Sigmoid colon (tissue), 7 donors: ENCODE measurements at regions of chr10 and their contacts with region 1.

Region 1: DNA sequence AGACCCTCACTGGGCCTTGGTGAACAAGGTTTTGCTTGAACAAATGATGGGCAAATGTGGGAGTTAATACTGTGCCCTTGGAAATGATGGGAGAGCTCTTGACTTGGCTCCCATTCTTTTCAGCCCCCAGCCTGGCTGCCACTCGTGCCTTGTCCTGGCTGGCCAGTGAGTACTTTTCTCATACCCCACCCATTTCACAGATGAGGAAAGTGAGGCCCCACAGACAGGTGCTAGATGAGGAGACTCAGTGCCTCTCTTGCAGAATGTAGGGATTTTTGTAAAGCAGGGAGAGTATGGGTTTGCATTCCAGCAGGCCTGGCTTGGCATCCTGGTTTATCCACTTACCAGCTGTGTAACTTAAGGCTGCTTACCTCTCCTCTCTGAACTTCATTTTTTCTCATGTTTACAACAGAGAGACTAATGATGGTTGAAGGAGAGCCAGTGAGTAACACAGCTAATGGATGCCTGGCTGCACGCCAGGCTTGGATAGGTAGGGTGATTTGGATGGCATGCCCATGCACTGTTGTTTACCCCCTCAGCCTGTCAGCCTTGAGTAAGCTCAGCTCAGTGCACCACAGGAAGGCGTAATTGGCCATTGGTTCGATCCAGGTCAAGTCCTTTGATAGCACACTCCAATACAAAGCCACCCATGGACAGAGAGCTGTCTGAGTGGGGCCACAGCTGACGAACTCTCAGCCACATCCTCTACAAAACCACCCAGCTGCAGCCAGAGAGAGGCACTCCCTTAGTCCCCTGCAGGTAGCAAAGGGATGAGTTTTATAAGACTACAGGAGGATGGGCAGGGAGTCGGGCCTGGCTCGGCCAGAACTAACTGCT is 436.8 kb downstream of the RPS24 start:
- DNase-seq: no peak
- H3K4me3 ChIP-seq: no peak overlapping the region
- H3K27ac ChIP-seq: peak overlapping the region in 3 of 4 donors; percentile 79 to 90 (median 84)
- H3K4me1 ChIP-seq: peaks cover 0 to 38% (median 35%) of the 10 kb centered on the region in 4 donors
- H3K27me3 ChIP-seq: no peaks in the 10 kb centered on the region
- CTCF ChIP-seq: no peak
- EP300 ChIP-seq: no peak
- POLR2A ChIP-seq: no peak

Region 2: DNA sequence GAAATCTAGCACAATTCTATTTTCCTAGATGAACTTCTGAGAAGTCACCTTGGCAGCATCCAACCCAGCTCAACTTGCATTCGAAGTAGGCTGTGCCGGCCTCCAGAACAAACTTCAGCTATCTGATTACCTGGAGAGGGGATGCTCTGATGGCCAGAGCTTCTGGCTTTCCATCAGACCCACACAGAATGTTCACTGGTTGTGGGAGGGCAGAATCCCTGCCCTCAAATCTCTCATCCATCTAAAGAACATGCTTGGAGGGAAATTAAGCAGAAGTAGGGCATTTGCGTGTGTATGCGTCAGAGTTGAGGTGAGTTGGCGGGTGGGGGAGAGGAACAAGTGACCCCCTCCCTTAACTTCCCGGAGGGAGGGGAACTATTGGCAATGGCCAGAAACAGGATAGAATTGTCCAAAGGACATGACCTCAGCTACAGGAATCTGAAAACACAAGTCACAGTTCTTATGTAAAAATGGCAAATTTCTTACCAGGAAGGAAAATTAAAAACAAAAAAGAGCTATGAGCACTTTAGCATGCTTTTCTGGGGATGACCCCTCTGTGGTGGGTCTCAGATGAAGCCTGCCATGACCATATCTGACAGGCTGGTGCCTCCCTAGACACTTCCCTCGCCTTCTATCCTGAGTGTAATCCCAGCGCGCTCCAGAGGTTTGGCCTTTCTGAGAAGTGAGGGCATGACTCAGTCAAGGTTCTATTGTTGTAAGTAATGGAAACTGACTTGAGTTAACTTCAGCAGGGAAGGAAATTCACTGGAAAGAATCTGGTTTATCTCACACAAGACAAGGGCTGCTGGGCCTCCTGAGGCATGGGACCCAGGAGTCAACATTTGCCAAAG is 158.1 kb before region 1 on chr10:
- intact Hi-C with region 1: loop called (anchors 5 kb)
- DNase-seq: peak; percentile 87
- H3K4me3 ChIP-seq: no peak overlapping the region
- H3K27ac ChIP-seq: peak overlapping the region; percentile 16 to 93 (median 88)
- H3K4me1 ChIP-seq: peaks cover 0 to 69% (median 49%) of the 10 kb centered on the region in 4 donors
- H3K27me3 ChIP-seq: no peaks in the 10 kb centered on the region
- CTCF ChIP-seq: peak in 1 of 4 experiments; percentile 16
- EP300 ChIP-seq: peak; percentile 66 to 92 (median 84)
- POLR2A ChIP-seq: no peak

Region 3: DNA sequence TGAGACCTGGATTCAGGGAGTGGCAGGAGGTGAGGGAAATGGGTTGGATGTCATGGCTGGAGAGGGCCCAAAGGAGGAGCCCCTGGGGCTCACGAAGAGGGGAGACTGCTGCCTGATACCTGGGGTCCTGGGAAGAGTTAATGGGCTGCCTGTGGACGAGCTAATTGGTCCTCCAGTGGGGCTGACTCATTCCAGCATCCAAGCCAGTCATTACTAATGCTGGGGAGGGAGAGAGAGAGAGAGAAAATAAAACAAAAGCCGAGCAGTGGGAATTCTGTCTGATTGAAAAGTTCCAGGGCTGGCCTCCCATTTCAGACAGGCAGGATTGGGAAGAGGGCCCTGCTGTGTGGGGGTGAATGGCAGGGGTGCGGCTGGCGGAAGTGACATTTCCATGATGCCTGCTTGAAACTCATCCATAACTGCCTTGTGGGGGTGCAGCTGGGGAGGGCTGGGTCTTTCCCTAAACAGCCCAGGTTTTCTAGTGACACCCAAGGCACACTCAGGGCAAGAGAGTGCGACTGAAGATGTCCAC is 139.0 kb before region 1 on chr10:
- intact Hi-C with region 1: loop called (anchors 5 kb)
- DNase-seq: peak; percentile 73
- H3K4me3 ChIP-seq: no peak overlapping the region
- H3K27ac ChIP-seq: peak overlapping the region; percentile 41 to 86 (median 82)
- H3K4me1 ChIP-seq: peaks cover 0 to 49% (median 48%) of the 10 kb centered on the region in 4 donors
- H3K27me3 ChIP-seq: no peaks in the 10 kb centered on the region
- CTCF ChIP-seq: no peak
- EP300 ChIP-seq: peak in 2 of 4 donors; percentile 22 to 25
- POLR2A ChIP-seq: no peak

Region 4: DNA sequence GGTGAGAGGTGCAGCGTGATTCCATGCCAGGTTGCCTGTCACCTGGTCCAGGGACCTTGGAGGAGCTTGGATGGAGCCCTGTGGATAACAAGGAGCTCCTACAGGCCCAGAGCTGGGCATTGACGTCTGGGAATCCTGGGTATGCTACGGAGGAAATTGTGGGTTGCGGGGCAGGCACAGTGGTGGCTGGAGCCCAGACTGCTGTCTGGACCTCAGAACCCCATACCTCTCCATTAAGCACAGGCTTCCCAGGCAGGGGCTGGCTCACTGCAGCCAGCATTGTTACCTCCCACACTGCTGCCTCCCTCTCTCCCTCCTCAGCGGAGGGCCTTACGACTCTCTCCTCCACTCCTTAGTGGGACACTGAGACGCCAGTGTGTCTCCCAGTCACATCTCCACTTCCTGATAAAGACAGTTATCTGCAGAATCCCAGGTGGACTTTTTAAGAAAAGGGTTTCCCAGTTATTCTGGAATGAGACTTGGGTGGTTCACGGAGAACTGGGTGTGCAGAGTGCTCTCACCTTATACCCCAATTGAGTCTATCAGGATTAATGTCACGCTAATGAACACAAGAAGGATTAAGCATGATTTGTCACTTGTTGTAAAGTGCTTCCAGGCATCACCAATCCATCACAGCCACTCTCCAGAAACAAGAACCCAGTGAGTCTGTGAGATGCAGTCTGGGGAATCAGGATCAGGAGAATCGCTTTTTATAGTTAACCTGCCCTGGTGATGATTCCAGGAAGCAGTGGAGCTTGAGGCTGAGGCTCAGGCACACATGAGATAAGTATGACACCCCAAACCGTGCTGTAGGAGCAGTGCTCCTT is 127.4 kb before region 1 on chr10:
- intact Hi-C with region 1: no loop called
- DNase-seq: peak; percentile 43
- H3K4me3 ChIP-seq: no peak overlapping the region
- H3K27ac ChIP-seq: no peak overlapping the region
- H3K4me1 ChIP-seq: peaks cover 0 to 9% (median 4%) of the 10 kb centered on the region in 4 donors
- H3K27me3 ChIP-seq: no peaks in the 10 kb centered on the region
- CTCF ChIP-seq: no peak
- EP300 ChIP-seq: no peak
- POLR2A ChIP-seq: no peak

Region 5: GRCh38 chr10:78407009-78407711 is 63.3 kb before region 1 on chr10:
- intact Hi-C with region 1: loop called (anchors 5 kb)
- DNase-seq: peak; percentile 89
- H3K4me3 ChIP-seq: peak overlapping the region in 3 of 4 donors; percentile 18 to 24 (median 20)
- H3K27ac ChIP-seq: peak overlapping the region; percentile 30 to 80 (median 76)
- H3K4me1 ChIP-seq: peaks cover 0 to 35% (median 30%) of the 10 kb centered on the region in 4 donors
- H3K27me3 ChIP-seq: no peaks in the 10 kb centered on the region
- CTCF ChIP-seq: no peak
- EP300 ChIP-seq: no peak
- POLR2A ChIP-seq: no peak

Region 6: DNA sequence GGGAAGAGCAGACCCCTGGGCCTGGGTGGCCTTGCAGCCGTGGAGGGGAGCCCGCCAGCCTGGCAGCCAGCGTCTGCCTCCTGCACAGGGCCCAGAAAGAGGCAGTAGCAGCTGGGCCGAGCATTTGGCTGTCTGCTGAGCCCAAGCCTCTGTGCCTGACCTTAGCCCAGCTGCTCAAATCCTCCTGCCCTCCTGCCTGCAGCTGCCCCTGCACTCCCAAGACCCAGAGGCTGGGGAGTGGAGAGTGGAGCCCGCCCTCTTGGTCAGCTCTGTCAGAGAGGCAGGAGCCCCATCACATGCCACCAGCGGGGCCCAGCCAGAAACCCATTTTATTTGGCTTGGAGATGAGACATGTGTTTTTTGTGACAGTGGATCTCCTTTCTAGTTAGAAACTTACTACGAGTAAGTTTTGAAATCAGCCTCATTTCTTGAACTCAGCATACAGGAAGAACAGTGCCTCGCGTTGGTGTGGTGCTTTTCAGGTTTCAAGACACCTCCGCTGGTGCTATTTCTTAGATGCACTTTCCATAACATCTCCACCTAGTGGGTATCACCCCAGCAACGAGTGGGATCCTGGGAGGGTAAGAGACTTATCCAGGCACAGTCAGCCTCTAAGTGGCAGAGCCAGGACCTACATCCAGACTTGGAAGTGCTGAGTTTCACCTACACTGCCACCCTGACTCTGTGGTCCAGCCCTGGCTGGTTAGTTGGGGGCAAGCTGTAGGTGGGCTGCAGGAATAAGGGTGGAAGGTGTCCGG is 40.3 kb after region 1 on chr10:
- intact Hi-C with region 1: loop called (anchors 2 kb)
- DNase-seq: no peak
- H3K4me3 ChIP-seq: no peak overlapping the region
- H3K27ac ChIP-seq: peak overlapping the region; percentile 45 to 86 (median 82)
- H3K4me1 ChIP-seq: peaks cover 5 to 93% (median 88%) of the 10 kb centered on the region in 4 donors
- H3K27me3 ChIP-seq: no peaks in the 10 kb centered on the region
- CTCF ChIP-seq: no peak
- EP300 ChIP-seq: no peak
- POLR2A ChIP-seq: no peak